Mammary epithelial cell (primary cell): ENCODE measurements at regions of chr17 and their contacts with region 1.

Region 1: GRCh38 chr17:7239091-7240027 is at the start of gene PHF23:
- DNase-seq: peak; percentile 100
- H3K4me3 ChIP-seq: peak within 1 kb of the TSS; percentile 84 to 92 (median 90)
- H3K27ac ChIP-seq: peak within 1 kb of the TSS; percentile 79
- H3K4me1 ChIP-seq: peaks cover 45% of the 10 kb centered on the region
- H3K27me3 ChIP-seq: no peaks in the 10 kb centered on the region
- CTCF ChIP-seq: peak in 1 of 2 donors; percentile 7
- total RNA-seq, gene PHF23: 36.7 to 53.6 TPM

Region 2: DNA sequence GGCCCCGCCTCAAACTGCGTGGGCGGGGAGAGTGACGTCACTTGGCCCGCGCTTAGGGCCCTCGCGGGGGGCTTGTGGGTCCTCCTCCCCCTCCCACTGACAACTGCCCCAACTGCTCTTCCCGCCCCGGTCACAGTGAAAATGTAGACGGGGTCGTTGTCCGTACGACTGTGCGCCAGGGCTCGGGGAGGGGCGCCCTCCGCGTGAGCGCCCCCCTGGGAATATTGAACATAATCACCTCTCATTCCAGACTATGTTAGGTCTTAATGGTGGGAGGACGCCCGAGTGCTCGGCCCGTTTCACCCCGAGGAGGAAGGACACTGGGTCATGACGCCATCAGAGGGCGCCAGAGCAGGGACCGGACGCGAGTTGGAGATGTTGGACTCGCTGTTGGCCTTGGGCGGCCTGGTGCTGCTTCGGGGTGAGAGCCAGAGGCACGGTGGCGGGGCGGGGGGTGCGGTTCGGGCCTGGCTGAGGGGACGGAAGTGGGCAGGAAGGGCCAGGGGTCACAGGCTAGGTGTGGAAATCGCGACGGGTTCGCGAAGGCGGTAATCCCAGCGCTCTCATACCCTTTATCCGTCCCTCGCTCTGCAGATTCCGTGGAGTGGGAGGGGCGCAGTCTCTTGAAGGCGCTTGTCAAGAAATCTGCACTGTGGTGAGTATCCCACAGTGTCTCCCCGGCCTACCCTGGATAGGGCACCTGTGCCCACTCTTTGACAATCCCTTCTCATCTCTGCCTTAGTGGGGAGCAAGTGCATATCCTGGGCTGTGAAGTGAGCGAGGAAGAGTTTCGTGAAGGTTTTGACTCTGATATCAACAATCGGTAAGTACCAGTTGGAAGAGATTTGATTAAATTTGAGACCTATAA is 13.1 kb after region 1 on chr17 and contains the start of gene ELP5:
- CTCF ChIA-PET with region 1: no interaction called
- dilution Hi-C with region 1: no loop called
- in situ Hi-C with region 1: no loop called
- intact Hi-C with region 1: loop called (anchors 1 kb)
- DNase-seq: peak; percentile 92
- H3K4me3 ChIP-seq: peak within 1 kb of the TSS; percentile 86 to 89 (median 88)
- H3K27ac ChIP-seq: peak within 1 kb of the TSS; percentile 96
- H3K4me1 ChIP-seq: peaks cover 15% of the 10 kb centered on the region
- H3K27me3 ChIP-seq: no peaks in the 10 kb centered on the region
- CTCF ChIP-seq: peak in 1 of 2 donors; percentile 20
- total RNA-seq, gene ELP5: 18.8 to 52.0 TPM